ENCODE measurements at regions of chr12 and their contacts with region 1.

Region 1: GRCh38 chr12:59149997-59150642 is 229.8 kb upstream of the LRIG3 start:
- DNase-seq: peak in 2 of 9 donors; percentile 3 to 20
- ATAC-seq: peak; percentile 74
- H3K4me3 ChIP-seq: no peak overlapping the region
- H3K4me3 Mint-ChIP-seq: no peak overlapping the region
- H3K27ac ChIP-seq: no peak overlapping the region
- H3K27ac Mint-ChIP-seq: no peak overlapping the region
- H3K4me1 ChIP-seq: no peaks in the 10 kb centered on the region
- H3K4me1 Mint-ChIP-seq: peaks cover 0 to 4% (median 0%) of the 10 kb centered on the region in 7 donors
- H3K27me3 ChIP-seq: no peaks in the 10 kb centered on the region
- H3K27me3 Mint-ChIP-seq: no peaks in the 10 kb centered on the region

Region 2: GRCh38 chr12:59113831-59114615 is 36.1 kb before region 1 on chr12:
- CTCF ChIA-PET with region 1: no interaction called
- POLR2A ChIA-PET with region 1: no interaction called
- intact Hi-C with region 1: loop called in 1 of 2 experiments (anchors 1 kb)
- DNase-seq: peak in 4 of 9 donors; percentile 1 to 54 (median 8)
- ATAC-seq: no peak
- H3K4me3 ChIP-seq: no peak overlapping the region
- H3K4me3 Mint-ChIP-seq: no peak overlapping the region
- H3K27ac ChIP-seq: no peak overlapping the region
- H3K27ac Mint-ChIP-seq: no peak overlapping the region
- H3K4me1 ChIP-seq: no peaks in the 10 kb centered on the region
- H3K4me1 Mint-ChIP-seq: peaks cover 0 to 2% (median 0%) of the 10 kb centered on the region in 7 donors
- H3K27me3 ChIP-seq: no peaks in the 10 kb centered on the region
- H3K27me3 Mint-ChIP-seq: no peaks in the 10 kb centered on the region